Activated naive CD4-positive, alpha-beta T cell treated with anti-CD3 and anti-CD28 coated beads, Interleukin-2, amount 10 ng/mL, durations not matched to agents 7 days and 5 days (primary cell): ENCODE measurements at regions of chr1 and their contacts with region 1.

Region 1: GRCh38 chr1:26391450-26391849 is 18.9 kb upstream of the ZNF683 start:
- DNase-seq: peak; percentile 77
- H3K4me3 Mint-ChIP-seq: no peak overlapping the region
- H3K27ac Mint-ChIP-seq: no peak overlapping the region
- H3K4me1 Mint-ChIP-seq: peaks cover 49% of the 10 kb centered on the region
- H3K27me3 Mint-ChIP-seq: peaks cover 22% of the 10 kb centered on the region

Region 2: GRCh38 chr1:26279456-26280332 is 111.8 kb before region 1 on chr1 and contains the start of gene SH3BGRL3:
- CTCF ChIA-PET with region 1: interaction called, 30 read pairs
- DNase-seq: peak; percentile 91
- H3K4me3 Mint-ChIP-seq: peak within 1 kb of the TSS; percentile 91
- H3K27ac Mint-ChIP-seq: peak within 1 kb of the TSS; percentile 93
- H3K4me1 Mint-ChIP-seq: peaks cover 88% of the 10 kb centered on the region
- H3K27me3 Mint-ChIP-seq: no peaks in the 10 kb centered on the region